ENCODE measurements at regions of chr19 and their contacts with region 1.

Region 1: GRCh38 chr19:39740395-39740794 is 2.6 kb upstream of the CLC start:
- DNase-seq: no peak
- ATAC-seq: no peak
- H3K4me3 ChIP-seq: no peak overlapping the region
- H3K4me3 Mint-ChIP-seq: peak overlapping the region in 6 of 10 donors; percentile 2 to 65 (median 53)
- H3K27ac ChIP-seq: no peak overlapping the region
- H3K27ac Mint-ChIP-seq: peak overlapping the region in 5 of 9 donors; percentile 2 to 76 (median 37)
- H3K4me1 ChIP-seq: peaks cover 0 to 9% of the 10 kb centered on the region in 2 donors
- H3K4me1 Mint-ChIP-seq: peaks cover 14 to 46% (median 32%) of the 10 kb centered on the region in 7 donors
- H3K27me3 ChIP-seq: no peaks in the 10 kb centered on the region
- H3K27me3 Mint-ChIP-seq: peaks cover 0 to 25% (median 0%) of the 10 kb centered on the region in 5 donors

Region 2: DNA sequence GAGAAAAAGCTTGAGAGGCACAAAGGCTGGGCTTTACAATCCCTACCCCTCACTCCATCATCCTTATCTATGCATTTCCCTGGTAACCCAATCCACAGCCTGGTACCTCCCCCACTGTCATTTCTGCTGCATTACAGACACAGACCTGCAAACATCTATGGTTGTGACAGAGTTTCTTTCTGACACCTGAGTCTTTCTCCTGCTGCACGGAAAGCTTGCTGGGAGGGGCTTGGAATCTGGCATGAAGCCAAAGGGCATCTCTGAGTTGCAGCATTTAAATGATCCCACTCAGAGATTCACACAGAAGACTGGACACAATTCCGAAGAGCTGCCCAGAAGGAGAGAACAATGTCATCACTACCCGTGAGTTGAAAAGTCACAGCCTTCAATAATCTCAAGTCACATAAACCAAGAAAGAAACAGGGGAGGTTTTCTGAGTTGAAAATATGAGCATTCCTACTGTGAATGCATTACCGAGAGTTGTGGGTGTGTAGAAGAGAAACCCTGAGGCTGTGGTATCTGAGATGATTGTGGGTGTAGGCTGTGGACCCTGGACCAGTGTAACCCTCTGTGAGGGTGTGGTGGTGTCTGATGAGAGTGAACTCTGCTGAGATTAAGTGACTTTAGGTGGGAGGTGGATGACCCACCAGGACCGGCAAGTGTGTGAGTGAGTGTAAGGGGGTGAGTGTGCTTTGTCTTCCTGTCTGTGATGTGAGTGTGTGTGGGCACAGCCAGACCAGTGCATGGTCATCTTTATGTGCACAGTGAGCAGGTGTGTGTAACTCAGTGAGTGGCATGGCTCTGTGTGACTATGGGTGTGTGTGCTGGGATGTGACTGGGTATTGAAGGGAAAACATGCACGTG is 36.0 kb before region 1 on chr19 and contains the start of gene LGALS14:
- CTCF ChIA-PET with region 1: no interaction called
- POLR2A ChIA-PET with region 1: no interaction called
- intact Hi-C with region 1: loop called in 1 of 2 experiments (anchors 5 kb)
- DNase-seq: no peak
- ATAC-seq: no peak
- H3K4me3 ChIP-seq: no peak within 1 kb of the TSS
- H3K4me3 Mint-ChIP-seq: peak within 1 kb of the TSS in 9 of 10 donors; percentile 30 to 77 (median 58)
- H3K27ac ChIP-seq: no peak within 1 kb of the TSS
- H3K27ac Mint-ChIP-seq: peak within 1 kb of the TSS; percentile 75 to 96 (median 88)
- H3K4me1 ChIP-seq: peaks cover 0 to 28% of the 10 kb centered on the region in 2 donors
- H3K4me1 Mint-ChIP-seq: peaks cover 19 to 47% (median 44%) of the 10 kb centered on the region in 7 donors
- H3K27me3 ChIP-seq: no peaks in the 10 kb centered on the region
- H3K27me3 Mint-ChIP-seq: peaks cover 0 to 3% (median 0%) of the 10 kb centered on the region in 5 donors
- total RNA-seq, gene LGALS14: 0.41 TPM in 1 of 5 experiments, not detected in the others